Mammary epithelial cell (primary cell): ENCODE measurements at regions of chr20 and their contacts with region 1.

Region 1: GRCh38 chr20:18137412-18138265 is at the starts of genes KAT14 and PET117:
- DNase-seq: peak; percentile 93
- H3K4me3 ChIP-seq: peak within 1 kb of the TSS; percentile 85 to 86 (median 86)
- H3K27ac ChIP-seq: peak within 1 kb of the TSS; percentile 75
- H3K4me1 ChIP-seq: peaks cover 21% of the 10 kb centered on the region
- H3K27me3 ChIP-seq: no peaks in the 10 kb centered on the region
- CTCF ChIP-seq: no peak
- total RNA-seq, gene KAT14: 18.5 to 20.2 TPM
- total RNA-seq, gene PET117: 10.8 to 13.2 TPM

Region 2: GRCh38 chr20:18056174-18057100 is 81.2 kb before region 1 on chr20:
- CTCF ChIA-PET with region 1: no interaction called
- dilution Hi-C with region 1: no loop called
- in situ Hi-C with region 1: no loop called
- intact Hi-C with region 1: loop called (anchors 5 kb)
- DNase-seq: peak; percentile 8
- H3K4me3 ChIP-seq: peak overlapping the region; percentile 58 to 82 (median 77)
- H3K27ac ChIP-seq: no peak overlapping the region
- H3K4me1 ChIP-seq: peaks cover 22% of the 10 kb centered on the region
- H3K27me3 ChIP-seq: no peaks in the 10 kb centered on the region
- CTCF ChIP-seq: no peak

Region 3: GRCh38 chr20:18188434-18188833 is 50.8 kb after region 1 on chr20:
- CTCF ChIA-PET with region 1: no interaction called
- dilution Hi-C with region 1: no loop called
- in situ Hi-C with region 1: no loop called
- intact Hi-C with region 1: loop called (anchors 5 kb)
- DNase-seq: no peak
- H3K4me3 ChIP-seq: no peak overlapping the region
- H3K27ac ChIP-seq: no peak overlapping the region
- H3K4me1 ChIP-seq: peaks cover 43% of the 10 kb centered on the region
- H3K27me3 ChIP-seq: no peaks in the 10 kb centered on the region
- CTCF ChIP-seq: no peak

Region 4: DNA sequence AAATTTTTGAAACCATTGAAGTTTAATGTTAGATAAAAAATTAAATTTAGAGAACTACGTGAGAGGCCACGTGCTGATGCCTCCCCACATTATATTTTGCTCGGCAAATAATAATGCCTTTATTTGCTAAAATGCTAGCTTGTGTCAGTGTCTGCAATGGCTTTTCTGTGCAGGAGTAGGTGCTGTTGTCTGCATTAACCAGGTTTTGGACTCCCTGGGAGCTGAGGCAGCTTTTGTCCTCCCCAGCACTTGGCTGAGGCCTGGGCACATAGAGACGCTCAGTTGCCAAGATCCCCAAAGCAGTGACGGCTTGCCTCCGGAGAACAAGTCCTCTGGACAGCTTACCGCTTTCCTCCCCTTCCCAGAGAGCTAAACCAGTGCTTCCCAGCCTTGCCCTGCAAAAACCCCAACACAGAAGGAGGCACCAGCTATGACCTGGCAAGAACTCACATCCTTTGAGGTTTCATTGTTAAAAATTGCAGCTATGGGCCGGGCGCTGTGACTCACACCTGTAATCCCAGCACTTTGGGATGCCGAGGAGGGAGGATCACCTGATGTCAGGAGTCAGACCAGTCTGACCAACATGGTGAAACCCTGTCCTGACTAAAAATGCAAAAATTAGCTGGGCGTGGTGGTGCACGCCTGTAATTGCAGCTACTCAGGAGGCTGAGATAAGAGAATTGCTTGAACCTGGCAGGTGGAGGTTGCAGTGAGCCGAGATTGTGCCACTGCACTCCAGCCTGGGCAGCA is 59.9 kb after region 1 on chr20:
- CTCF ChIA-PET with region 1: no interaction called
- dilution Hi-C with region 1: no loop called
- in situ Hi-C with region 1: no loop called
- intact Hi-C with region 1: loop called (anchors 2 kb)
- DNase-seq: peak; percentile 98
- H3K4me3 ChIP-seq: no peak overlapping the region
- H3K27ac ChIP-seq: peak overlapping the region; percentile 96
- H3K4me1 ChIP-seq: peaks cover 11% of the 10 kb centered on the region
- H3K27me3 ChIP-seq: no peaks in the 10 kb centered on the region
- CTCF ChIP-seq: peak; percentile 45 to 47